Naive thymus-derived CD4-positive, alpha-beta T cell (primary cell): ENCODE measurements at regions of chr3 and their contacts with region 1.

Region 1: DNA sequence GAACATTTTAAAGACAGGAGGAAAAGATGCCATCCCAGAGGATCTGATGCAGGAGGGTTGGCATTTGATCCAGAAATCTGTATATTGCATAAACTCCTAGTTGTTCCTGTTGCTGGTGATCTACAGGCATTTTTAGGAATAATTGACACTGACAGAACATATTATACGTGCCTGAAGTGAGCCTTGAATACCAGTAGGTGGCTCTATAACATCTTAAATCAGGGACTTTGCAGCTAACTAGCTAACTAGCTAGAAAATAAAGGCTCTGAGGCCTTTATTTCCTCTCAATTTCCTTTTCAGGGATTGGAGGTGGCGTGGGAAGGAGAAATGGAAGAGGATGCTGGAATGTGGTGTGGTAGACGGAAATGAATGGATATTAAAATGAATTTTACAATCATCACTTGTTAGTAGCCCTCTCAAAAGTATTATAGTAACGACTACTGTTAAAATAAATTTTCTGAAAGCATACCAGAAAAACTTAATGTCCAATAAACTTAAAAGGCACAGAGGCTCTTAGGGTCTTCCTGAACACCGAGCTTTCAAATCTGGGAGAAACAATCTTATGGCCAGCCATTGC is 73.9 kb upstream of the ZBED2 start:
- DNase-seq: peak in 7 of 9 donors; percentile 22 to 64 (median 53)
- ATAC-seq: peak; percentile 53
- H3K4me3 ChIP-seq: no peak overlapping the region
- H3K4me3 Mint-ChIP-seq: peak overlapping the region in 8 of 10 donors; percentile 20 to 74 (median 36)
- H3K27ac ChIP-seq: peak overlapping the region; percentile 14
- H3K27ac Mint-ChIP-seq: peak overlapping the region; percentile 26 to 94 (median 76)
- H3K4me1 ChIP-seq: peaks cover 52 to 59% of the 10 kb centered on the region in 2 donors
- H3K4me1 Mint-ChIP-seq: peaks cover 46 to 91% (median 85%) of the 10 kb centered on the region in 7 donors
- H3K27me3 ChIP-seq: no peaks in the 10 kb centered on the region
- H3K27me3 Mint-ChIP-seq: no peaks in the 10 kb centered on the region

Region 2: DNA sequence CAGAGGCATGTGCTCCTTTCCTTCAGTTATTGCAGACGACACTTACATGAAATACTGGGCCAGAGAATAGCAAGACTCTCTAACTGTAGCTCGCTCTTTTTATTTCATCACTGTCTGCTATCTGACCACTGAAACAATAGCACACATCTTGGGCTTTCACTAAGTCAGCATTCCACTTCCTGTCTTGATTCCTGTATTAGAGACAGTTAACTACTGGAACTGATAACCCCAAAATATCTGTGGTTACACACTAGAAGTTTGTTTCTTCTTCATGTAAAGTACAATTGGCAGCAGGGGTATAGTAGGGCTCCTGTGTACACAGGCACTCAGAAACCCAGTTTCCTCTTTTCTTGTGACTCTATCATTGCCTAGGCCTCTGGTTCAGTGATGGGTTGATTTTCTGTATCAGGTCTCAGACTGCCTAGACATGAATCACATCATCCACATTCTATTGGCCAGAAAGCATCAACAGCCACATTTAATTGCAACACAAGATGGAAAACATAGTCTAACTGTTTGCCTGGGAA is 357.2 kb before region 1 on chr3:
- CTCF ChIA-PET with region 1: no interaction called
- POLR2A ChIA-PET with region 1: no interaction called
- intact Hi-C with region 1: loop called (anchors 5 to 10 kb)
- DNase-seq: peak in 1 of 9 donors; percentile 19
- ATAC-seq: peak; percentile 62
- H3K4me3 ChIP-seq: no peak overlapping the region
- H3K4me3 Mint-ChIP-seq: peak overlapping the region in 8 of 10 donors; percentile 15 to 76 (median 56)
- H3K27ac ChIP-seq: peak overlapping the region; percentile 63
- H3K27ac Mint-ChIP-seq: peak overlapping the region in 7 of 9 donors; percentile 79 to 99 (median 92)
- H3K4me1 ChIP-seq: peaks cover 22 to 51% of the 10 kb centered on the region in 2 donors
- H3K4me1 Mint-ChIP-seq: peaks cover 0 to 57% (median 0%) of the 10 kb centered on the region in 7 donors
- H3K27me3 ChIP-seq: no peaks in the 10 kb centered on the region
- H3K27me3 Mint-ChIP-seq: no peaks in the 10 kb centered on the region

Region 3: DNA sequence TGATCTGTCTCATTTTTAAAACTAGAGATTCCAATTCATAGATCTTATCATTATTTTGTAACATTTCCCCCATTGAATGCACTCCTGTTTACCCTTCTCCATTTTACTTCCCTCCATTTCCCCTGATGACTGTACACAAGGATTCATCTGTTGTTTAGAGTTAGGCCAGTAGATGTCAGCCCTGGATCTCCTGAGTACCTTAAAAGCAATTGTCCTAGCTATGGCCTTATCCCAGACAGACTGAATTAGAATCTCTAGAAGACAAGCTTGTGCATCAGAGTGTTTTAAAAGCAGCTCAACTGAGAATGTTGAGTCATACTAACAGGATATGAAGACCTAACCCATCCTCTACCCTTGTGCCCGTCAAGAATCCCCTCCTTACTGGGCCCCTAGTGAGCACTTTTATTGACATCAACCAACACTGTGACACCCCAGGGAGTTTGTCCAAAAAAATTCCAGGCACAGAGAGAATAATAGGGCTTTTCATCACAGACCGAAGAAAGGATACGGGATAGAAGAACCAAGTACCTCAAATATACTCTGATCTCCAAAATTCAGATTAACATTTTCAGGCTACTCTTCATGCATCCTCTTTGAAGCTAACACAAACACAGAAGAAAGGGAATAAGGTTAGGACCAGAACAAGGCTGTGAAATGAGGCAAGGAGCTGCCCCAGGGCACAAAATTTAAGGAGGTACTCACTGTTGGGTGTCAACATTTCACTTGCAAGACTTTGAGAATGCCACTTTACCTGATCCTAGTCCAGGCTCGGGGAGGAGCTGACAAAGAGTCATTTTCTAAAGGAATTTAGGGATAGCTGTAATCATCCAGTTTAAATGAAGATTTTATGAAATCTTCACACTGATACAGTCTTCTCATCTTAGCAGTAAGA is 91.0 kb before region 1 on chr3:
- CTCF ChIA-PET with region 1: no interaction called
- POLR2A ChIA-PET with region 1: no interaction called
- intact Hi-C with region 1: loop called in 1 of 2 experiments (anchors 1 kb)
- DNase-seq: peak in 1 of 9 donors; percentile 7
- ATAC-seq: peak; percentile 71
- H3K4me3 ChIP-seq: no peak overlapping the region
- H3K4me3 Mint-ChIP-seq: peak overlapping the region in 1 of 10 donors; percentile 13
- H3K27ac ChIP-seq: no peak overlapping the region
- H3K27ac Mint-ChIP-seq: peak overlapping the region in 8 of 9 donors; percentile 27 to 83 (median 60)
- H3K4me1 ChIP-seq: no peaks in the 10 kb centered on the region
- H3K4me1 Mint-ChIP-seq: peaks cover 18 to 72% (median 61%) of the 10 kb centered on the region in 7 donors
- H3K27me3 ChIP-seq: no peaks in the 10 kb centered on the region
- H3K27me3 Mint-ChIP-seq: no peaks in the 10 kb centered on the region

Region 4: GRCh38 chr3:111650378-111651275 is 18.4 kb before region 1 on chr3:
- CTCF ChIA-PET with region 1: interaction called, 3 read pairs
- POLR2A ChIA-PET with region 1: no interaction called
- intact Hi-C with region 1: loop called in 1 of 2 experiments (anchors 2 kb)
- DNase-seq: no peak
- ATAC-seq: no peak
- H3K4me3 ChIP-seq: no peak overlapping the region
- H3K4me3 Mint-ChIP-seq: no peak overlapping the region
- H3K27ac ChIP-seq: no peak overlapping the region
- H3K27ac Mint-ChIP-seq: peak overlapping the region in 2 of 9 donors; percentile 32 to 55
- H3K4me1 ChIP-seq: no peaks in the 10 kb centered on the region
- H3K4me1 Mint-ChIP-seq: peaks cover 0 to 16% (median 0%) of the 10 kb centered on the region in 7 donors
- H3K27me3 ChIP-seq: no peaks in the 10 kb centered on the region
- H3K27me3 Mint-ChIP-seq: no peaks in the 10 kb centered on the region

Region 5: GRCh38 chr3:111810909-111811308 is 141.9 kb after region 1 on chr3:
- CTCF ChIA-PET with region 1: no interaction called
- POLR2A ChIA-PET with region 1: no interaction called
- intact Hi-C with region 1: no loop called
- DNase-seq: no peak
- ATAC-seq: no peak
- H3K4me3 ChIP-seq: no peak overlapping the region
- H3K4me3 Mint-ChIP-seq: no peak overlapping the region
- H3K27ac ChIP-seq: no peak overlapping the region
- H3K27ac Mint-ChIP-seq: no peak overlapping the region
- H3K4me1 ChIP-seq: no peaks in the 10 kb centered on the region
- H3K4me1 Mint-ChIP-seq: no peaks in the 10 kb centered on the region
- H3K27me3 ChIP-seq: no peaks in the 10 kb centered on the region
- H3K27me3 Mint-ChIP-seq: peaks cover 0 to 5% (median 0%) of the 10 kb centered on the region in 5 donors

Region 6: DNA sequence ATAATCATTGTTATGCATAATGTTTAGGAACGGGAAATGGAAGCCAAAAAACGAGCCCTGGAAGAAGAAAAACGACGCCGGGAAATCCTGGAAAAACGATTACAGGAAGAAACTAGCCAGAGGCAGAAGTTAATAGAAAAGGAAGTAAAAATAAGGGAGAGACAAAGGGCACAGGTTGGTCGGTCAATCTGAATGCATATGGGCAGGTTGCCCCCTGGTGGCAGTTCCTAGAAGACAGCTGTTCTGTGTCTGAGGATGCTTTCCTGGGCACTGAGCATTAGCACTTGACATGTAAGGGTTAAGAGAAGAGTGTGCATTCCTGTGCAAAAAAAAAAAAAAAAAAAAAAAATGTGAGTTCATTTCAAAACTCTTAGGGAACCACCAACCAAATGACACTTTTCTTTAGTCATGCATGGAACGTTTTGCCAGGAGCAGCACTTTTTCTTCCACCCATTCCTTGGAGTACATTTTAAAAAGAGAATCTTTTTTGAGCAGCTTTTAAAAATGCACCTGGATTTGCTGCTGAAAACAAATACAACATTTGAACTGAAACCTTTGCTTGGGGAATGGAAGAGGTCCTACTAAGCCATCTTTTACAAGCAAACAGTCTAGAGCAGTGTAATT is 298.8 kb after region 1 on chr3:
- CTCF ChIA-PET with region 1: interaction called, 102 read pairs
- POLR2A ChIA-PET with region 1: interaction called, 6 read pairs
- intact Hi-C with region 1: loop called (anchors 1 kb)
- DNase-seq: peak; percentile 44 to 72 (median 64)
- ATAC-seq: peak; percentile 96
- H3K4me3 ChIP-seq: no peak overlapping the region
- H3K4me3 Mint-ChIP-seq: peak overlapping the region in 2 of 10 donors; percentile 12 to 44
- H3K27ac ChIP-seq: no peak overlapping the region
- H3K27ac Mint-ChIP-seq: peak overlapping the region in 1 of 9 donors; percentile 71
- H3K4me1 ChIP-seq: peaks cover 0 to 4% of the 10 kb centered on the region in 2 donors
- H3K4me1 Mint-ChIP-seq: peaks cover 3 to 13% (median 5%) of the 10 kb centered on the region in 7 donors
- H3K27me3 ChIP-seq: no peaks in the 10 kb centered on the region
- H3K27me3 Mint-ChIP-seq: no peaks in the 10 kb centered on the region

Region 7: GRCh38 chr3:112043603-112044201 is 374.7 kb after region 1 on chr3:
- CTCF ChIA-PET with region 1: interaction called, 3 read pairs
- POLR2A ChIA-PET with region 1: no interaction called
- intact Hi-C with region 1: loop called in 1 of 2 experiments (anchors 1 kb)
- DNase-seq: peak in 8 of 9 donors; percentile 29 to 70 (median 58)
- ATAC-seq: peak; percentile 95
- H3K4me3 ChIP-seq: no peak overlapping the region
- H3K4me3 Mint-ChIP-seq: no peak overlapping the region
- H3K27ac ChIP-seq: no peak overlapping the region
- H3K27ac Mint-ChIP-seq: no peak overlapping the region
- H3K4me1 ChIP-seq: no peaks in the 10 kb centered on the region
- H3K4me1 Mint-ChIP-seq: no peaks in the 10 kb centered on the region
- H3K27me3 ChIP-seq: no peaks in the 10 kb centered on the region
- H3K27me3 Mint-ChIP-seq: peaks cover 0 to 3% (median 0%) of the 10 kb centered on the region in 5 donors